Ascending aorta (tissue), 2 donors: ENCODE measurements at regions of chr6 and their contacts with region 1.

Region 1: GRCh38 chr6:30212865-30213666 is at the start of gene TRIM26:
- DNase-seq: peak; percentile 91 to 98
- H3K4me3 ChIP-seq: peak within 1 kb of the TSS; percentile 72 to 97
- H3K27ac ChIP-seq: peak within 1 kb of the TSS; percentile 93 to 97
- H3K4me1 ChIP-seq: peaks cover 7 to 20% of the 10 kb centered on the region in 2 donors
- H3K27me3 ChIP-seq: no peaks in the 10 kb centered on the region
- CTCF ChIP-seq: no peak
- total RNA-seq, gene TRIM26: 38.6 TPM

Region 2: GRCh38 chr6:29723262-29723665 is 489.8 kb before region 1 on chr6 and contains the start of gene HLA-F:
- intact Hi-C with region 1: loop called (anchors 5 kb)
- DNase-seq: peak; percentile 81 to 96
- H3K4me3 ChIP-seq: peak within 1 kb of the TSS; percentile 85 to 94
- H3K27ac ChIP-seq: peak within 1 kb of the TSS; percentile 87 to 93
- H3K4me1 ChIP-seq: peaks cover 12 to 13% of the 10 kb centered on the region in 2 donors
- H3K27me3 ChIP-seq: no peaks in the 10 kb centered on the region
- CTCF ChIP-seq: no peak
- total RNA-seq, gene HLA-F: 75.0 TPM

Region 3: GRCh38 chr6:30066577-30067459 is 146.2 kb before region 1 on chr6 and contains the start of gene PPP1R11:
- intact Hi-C with region 1: loop called (anchors 2 kb)
- DNase-seq: peak; percentile 98 to 99
- H3K4me3 ChIP-seq: peak within 1 kb of the TSS; percentile 75 to 77
- H3K27ac ChIP-seq: peak within 1 kb of the TSS; percentile 77 to 85
- H3K4me1 ChIP-seq: peaks cover 4 to 20% of the 10 kb centered on the region in 2 donors
- H3K27me3 ChIP-seq: no peaks in the 10 kb centered on the region
- CTCF ChIP-seq: no peak
- total RNA-seq, gene PPP1R11: 7.1 TPM

Region 4: GRCh38 chr6:30259140-30260035 is 46.3 kb after region 1 on chr6:
- intact Hi-C with region 1: loop called (anchors 1 kb)
- DNase-seq: peak; percentile 14 to 90
- H3K4me3 ChIP-seq: peak overlapping the region; percentile 82 to 84
- H3K27ac ChIP-seq: peak overlapping the region; percentile 85
- H3K4me1 ChIP-seq: peaks cover 0 to 5% of the 10 kb centered on the region in 2 donors
- H3K27me3 ChIP-seq: no peaks in the 10 kb centered on the region
- CTCF ChIP-seq: peak in 2 of 3 experiments; percentile 41 to 51

Region 5: DNA sequence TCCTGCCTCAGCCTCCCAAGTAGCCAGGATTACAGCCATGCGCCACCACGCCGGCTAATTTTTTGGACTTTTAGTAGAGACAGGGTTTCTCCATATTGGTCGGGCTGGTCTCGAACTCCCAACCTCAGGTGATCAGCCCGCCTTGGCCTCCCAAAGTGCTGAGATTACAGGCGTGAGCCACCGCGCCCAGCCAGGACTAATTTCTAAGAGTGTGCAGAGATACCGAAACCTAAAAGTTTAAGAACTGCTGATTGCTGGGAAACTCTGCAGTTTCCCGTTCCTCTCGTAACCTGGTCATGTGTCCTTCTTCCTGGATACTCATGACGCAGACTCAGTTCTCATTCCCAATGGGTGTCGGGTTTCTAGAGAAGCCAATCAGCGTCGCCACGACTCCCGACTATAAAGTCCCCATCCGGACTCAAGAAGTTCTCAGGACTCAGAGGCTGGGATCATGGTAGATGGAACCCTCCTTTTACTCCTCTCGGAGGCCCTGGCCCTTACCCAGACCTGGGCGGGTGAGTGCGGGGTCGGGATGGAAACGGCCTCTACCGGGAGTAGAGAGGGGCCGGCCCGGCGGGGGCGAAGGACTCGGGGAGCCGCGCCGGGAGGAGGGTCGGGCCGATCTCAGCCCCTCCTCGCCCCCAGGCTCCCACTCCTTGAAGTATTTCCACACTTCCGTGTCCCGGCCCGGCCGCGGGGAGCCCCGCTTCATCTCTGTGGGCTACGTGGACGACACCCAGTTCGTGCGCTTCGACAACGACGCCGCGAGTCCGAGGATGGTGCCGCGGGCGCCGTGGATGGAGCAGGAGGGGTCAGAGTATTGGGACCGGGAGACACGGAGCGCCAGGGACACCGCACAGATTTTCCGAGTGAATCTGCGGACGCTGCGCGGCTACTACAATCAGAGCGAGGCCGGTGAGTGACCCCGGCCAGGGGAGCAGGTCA is 276.3 kb after region 1 on chr6 and contains the start of gene HLA-E:
- intact Hi-C with region 1: loop called (anchors 5 kb)
- DNase-seq: peak; percentile 90 to 99
- H3K4me3 ChIP-seq: peak within 1 kb of the TSS; percentile 91 to 97
- H3K27ac ChIP-seq: peak within 1 kb of the TSS; percentile 98 to 99
- H3K4me1 ChIP-seq: peaks cover 6 to 14% of the 10 kb centered on the region in 2 donors
- H3K27me3 ChIP-seq: no peaks in the 10 kb centered on the region
- CTCF ChIP-seq: no peak
- total RNA-seq, gene HLA-E: 896 TPM